ENCODE measurements at regions of chr22 and their contacts with region 1.

Region 1: DNA sequence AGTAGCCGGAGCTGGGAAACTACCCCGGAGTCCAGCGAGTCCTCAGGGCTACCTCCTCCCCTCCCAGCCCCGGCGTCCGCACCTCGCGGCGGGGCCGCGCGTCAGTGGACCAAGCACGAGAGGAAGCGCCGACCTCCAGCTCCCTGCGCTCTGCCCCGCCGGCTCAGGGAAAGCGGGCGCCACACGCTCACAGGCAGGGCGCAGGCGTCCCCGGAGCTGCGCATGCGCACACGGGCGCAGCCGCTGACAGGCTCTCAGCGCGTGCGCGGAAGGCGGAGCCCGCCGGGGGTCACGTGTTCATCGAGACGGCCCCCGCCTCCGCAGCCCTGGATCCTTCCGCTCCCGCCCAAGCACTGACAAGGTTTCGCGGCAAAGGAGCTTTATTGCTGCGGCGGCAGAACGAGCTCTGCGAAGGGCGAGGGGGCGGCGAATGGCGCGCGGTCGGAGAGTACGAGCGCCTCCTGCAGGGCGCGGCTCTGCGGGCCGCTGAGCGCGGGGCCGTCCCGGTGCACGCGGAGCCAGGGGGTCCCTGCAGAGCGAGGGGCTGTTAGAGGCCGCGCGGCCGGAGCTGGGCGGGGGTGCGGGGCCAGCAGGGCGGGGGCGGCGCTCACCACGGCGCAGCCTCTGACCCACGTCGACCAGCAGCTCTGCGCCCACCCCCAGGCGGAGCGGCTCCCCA is at the start of gene SCO2:
- DNase-seq: peak; percentile 97 to 99 (median 97)
- ATAC-seq: peak; percentile 68 to 75 (median 72)
- H3K4me3 ChIP-seq: peak within 1 kb of the TSS; percentile 47 to 89 (median 74)
- H3K27ac ChIP-seq: peak within 1 kb of the TSS; percentile 83 to 99 (median 94)
- H3K4me1 ChIP-seq: peaks cover 0 to 52% (median 30%) of the 10 kb centered on the region in 12 donors
- H3K27me3 ChIP-seq: peaks cover 0 to 14% (median 0%) of the 10 kb centered on the region in 9 donors
- CTCF ChIP-seq: peak in 11 of 12 donors; percentile 14 to 56 (median 32)
- POLR2A ChIP-seq: peak in 1 of 2 donors; percentile 87
- total RNA-seq, gene SCO2: 0.67 to 2.6 (median 0.94) TPM in 4 of 9 donors, not detected in the others

Region 2: DNA sequence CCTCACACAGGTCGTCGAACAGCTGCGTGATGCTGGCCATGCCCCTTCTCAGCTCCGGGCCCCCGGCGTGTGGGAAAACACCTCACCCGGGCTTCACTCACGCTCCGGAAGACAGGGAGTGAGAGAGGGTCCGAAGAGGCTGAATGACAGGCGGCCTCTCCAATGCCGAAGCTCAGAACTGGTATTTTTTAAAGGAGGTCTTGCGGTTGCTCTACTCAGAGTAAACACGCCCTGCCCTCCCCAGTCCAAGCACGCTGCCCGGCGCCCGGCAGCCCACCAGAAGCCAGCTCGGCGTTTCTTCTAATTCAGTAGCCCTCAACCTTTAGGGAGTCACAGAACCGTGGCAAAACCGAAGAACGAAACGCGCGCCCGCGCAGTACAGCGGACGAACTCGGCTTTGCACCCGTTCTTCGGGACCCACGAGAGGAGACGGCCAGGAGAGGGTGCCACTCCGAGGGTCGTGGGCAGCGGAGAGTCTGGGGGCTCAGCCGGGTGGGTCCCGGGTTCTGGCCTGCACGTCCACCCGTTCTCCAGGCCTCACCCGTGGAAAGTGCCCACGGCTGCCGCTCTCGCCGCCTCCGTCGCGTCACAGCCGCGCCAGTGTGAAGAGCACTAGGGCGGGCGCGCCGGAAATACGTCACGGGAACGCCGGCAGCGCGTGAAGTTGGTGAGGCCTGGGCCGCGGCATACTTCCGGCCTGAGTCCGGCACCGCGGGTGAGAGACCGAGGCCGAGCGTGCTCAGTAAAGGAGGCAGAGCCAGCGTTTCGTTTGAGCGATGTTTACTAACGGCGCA is 280.9 kb before region 1 on chr22 and contains the start of gene TUBGCP6:
- intact Hi-C with region 1: loop called in 1 of 10 experiments (anchors 10 kb)
- DNase-seq: peak; percentile 96 to 98 (median 96)
- ATAC-seq: peak; percentile 88 to 96 (median 93)
- H3K4me3 ChIP-seq: peak within 1 kb of the TSS; percentile 51 to 99 (median 88)
- H3K27ac ChIP-seq: peak within 1 kb of the TSS; percentile 72 to 96 (median 88)
- H3K4me1 ChIP-seq: peaks cover 13 to 62% (median 44%) of the 10 kb centered on the region in 12 donors
- H3K27me3 ChIP-seq: no peaks in the 10 kb centered on the region
- CTCF ChIP-seq: peak in 7 of 12 donors; percentile 6 to 39 (median 24)
- POLR2A ChIP-seq: peak in 1 of 2 donors; percentile 81
- total RNA-seq, gene TUBGCP6: 14.1 to 28.8 (median 18.1) TPM

Region 3: DNA sequence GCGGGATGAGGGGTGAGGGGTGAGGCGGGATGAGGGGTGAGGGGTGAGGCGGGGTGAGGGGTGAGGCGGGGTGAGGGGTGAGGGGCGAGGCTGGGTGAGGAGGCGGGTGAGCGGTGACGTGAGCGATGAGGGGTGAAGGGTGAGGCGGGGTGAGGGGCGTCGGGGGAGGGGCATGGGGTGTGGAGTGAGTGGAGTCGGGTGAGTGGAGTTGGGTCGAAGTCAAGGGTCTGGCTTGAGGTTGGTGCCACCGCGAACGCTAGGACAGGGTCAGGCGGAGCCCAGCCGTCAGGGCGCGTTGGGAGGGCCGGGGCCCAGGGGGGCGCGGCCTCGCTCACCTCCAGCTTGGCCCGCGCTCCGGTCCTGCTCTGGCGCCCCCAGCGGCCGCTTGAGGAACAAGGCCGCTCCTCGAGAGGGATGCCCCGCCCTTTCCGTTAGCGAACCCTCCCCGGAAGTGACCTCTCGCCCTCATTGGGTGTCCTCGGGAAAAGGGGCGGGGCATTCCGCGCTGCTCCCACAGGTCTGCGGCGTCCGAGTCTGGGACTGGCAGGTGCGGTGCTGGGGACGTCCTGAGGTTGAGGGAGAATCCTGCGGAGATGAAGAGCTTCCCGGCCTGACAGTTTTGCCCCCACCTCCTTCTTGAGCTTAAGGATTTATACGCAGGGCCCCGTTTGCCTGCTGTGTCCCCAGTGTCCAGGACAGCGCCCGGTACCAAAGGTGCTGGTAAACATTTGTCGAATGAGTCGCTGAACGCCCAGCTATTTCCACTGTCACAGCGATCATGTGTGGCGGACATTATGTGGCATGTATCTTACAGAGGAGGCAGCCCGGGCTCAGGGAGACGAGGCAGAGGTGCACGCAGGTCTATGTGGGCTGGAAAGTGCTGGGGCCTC is 37.2 kb after region 1 on chr22 and contains the start of gene SYCE3:
- intact Hi-C with region 1: loop called in 3 of 10 experiments (anchors 1 to 5 kb)
- DNase-seq: peak; percentile 97 to 99 (median 98)
- ATAC-seq: peak; percentile 94 to 97 (median 96)
- H3K4me3 ChIP-seq: peak within 1 kb of the TSS; percentile 30 to 97 (median 64)
- H3K27ac ChIP-seq: peak within 1 kb of the TSS; percentile 65 to 96 (median 86)
- H3K4me1 ChIP-seq: peaks cover 0 to 17% (median 7%) of the 10 kb centered on the region in 12 donors
- H3K27me3 ChIP-seq: no peaks in the 10 kb centered on the region
- CTCF ChIP-seq: peak; percentile 92 to 100 (median 98)
- POLR2A ChIP-seq: peak; percentile 51 to 86
- total RNA-seq, gene SYCE3: not detected

Region 4: DNA sequence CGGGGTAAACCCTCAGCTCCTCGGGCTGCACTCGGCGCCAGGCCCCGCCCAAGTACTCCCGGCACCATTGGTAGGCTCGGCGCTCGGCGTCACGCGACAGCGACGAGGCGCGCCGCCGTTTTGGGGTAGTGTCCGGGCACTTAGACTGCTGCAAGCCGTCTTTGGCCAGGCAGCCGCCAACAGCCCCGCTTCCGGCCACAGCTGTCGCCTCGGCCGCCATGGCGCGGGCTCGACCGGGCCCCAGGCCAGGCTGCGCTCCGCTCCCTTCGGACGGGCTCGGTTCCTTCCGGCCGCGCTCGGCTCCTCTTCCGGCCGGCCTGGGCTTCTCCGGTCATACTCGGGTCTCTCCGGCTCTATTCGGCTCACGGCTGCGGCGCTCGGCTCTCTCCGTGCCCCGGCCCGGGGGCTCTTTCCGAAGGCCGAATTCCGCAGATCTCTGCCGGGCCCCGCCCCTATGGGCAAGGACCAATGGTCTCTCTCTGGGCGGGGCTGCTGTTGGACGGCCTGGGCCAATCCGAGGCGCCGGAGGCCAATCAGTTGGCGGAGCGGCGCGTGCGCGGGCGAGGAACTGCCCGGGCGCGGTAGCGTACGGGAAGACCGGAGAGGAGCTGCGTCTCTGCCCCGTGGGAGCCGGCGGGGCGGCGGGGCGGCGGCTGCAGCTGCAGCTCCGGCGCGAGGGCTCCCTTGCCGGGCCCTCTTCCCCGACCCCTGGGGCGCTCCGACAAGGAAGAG is 57.2 kb after region 1 on chr22 and contains the start of gene CHKB:
- intact Hi-C with region 1: loop called in 1 of 10 experiments (anchors 2 kb)
- DNase-seq: peak; percentile 99 to 100 (median 99)
- ATAC-seq: peak; percentile 94 to 97 (median 96)
- H3K4me3 ChIP-seq: peak within 1 kb of the TSS; percentile 56 to 95 (median 80)
- H3K27ac ChIP-seq: peak within 1 kb of the TSS; percentile 90 to 100 (median 99)
- H3K4me1 ChIP-seq: peaks cover 3 to 50% (median 32%) of the 10 kb centered on the region in 12 donors
- H3K27me3 ChIP-seq: no peaks in the 10 kb centered on the region
- CTCF ChIP-seq: no peak
- POLR2A ChIP-seq: peak; percentile 91 to 99
- total RNA-seq, gene CHKB: 23.3 to 54.6 (median 35.6) TPM

Region 5: GRCh38 chr22:50620593-50621355 is 95.2 kb after region 1 on chr22:
- intact Hi-C with region 1: loop called in 3 of 10 experiments (anchors 2 to 5 kb)
- DNase-seq: peak in 4 of 5 donors; percentile 76 to 87 (median 82)
- ATAC-seq: peak; percentile 74 to 91 (median 80)
- H3K4me3 ChIP-seq: peak overlapping the region in 9 of 12 donors; percentile 34 to 50 (median 43)
- H3K27ac ChIP-seq: peak overlapping the region in 8 of 12 donors; percentile 22 to 87 (median 52)
- H3K4me1 ChIP-seq: peaks cover 0 to 36% (median 21%) of the 10 kb centered on the region in 12 donors
- H3K27me3 ChIP-seq: no peaks in the 10 kb centered on the region
- CTCF ChIP-seq: peak in 5 of 12 donors; percentile 0 to 83 (median 63)
- POLR2A ChIP-seq: no peak